ENCODE measurements at regions of chr22 and their contacts with region 1.

Region 1: GRCh38 chr22:32444068-32444467 is 20.2 kb downstream of the BPIFC start:
- DNase-seq: peak; percentile 16 to 44 (median 25)
- ATAC-seq: peak; percentile 86
- H3K4me3 ChIP-seq: no peak overlapping the region
- H3K27ac ChIP-seq: no peak overlapping the region
- H3K4me1 ChIP-seq: no peaks in the 10 kb centered on the region
- H3K27me3 ChIP-seq: peaks cover 8 to 22% of the 10 kb centered on the region in 2 experiments; a peak in 4 of 5 replicates
- CTCF ChIP-seq: peak; percentile 49 to 63 (median 53)
- EP300 ChIP-seq: no peak
- POLR2A ChIP-seq: no peak
- RAD21 ChIP-seq: peak in 1 of 2 experiments; percentile 61; a peak in 3 of 4 replicates

Region 2: DNA sequence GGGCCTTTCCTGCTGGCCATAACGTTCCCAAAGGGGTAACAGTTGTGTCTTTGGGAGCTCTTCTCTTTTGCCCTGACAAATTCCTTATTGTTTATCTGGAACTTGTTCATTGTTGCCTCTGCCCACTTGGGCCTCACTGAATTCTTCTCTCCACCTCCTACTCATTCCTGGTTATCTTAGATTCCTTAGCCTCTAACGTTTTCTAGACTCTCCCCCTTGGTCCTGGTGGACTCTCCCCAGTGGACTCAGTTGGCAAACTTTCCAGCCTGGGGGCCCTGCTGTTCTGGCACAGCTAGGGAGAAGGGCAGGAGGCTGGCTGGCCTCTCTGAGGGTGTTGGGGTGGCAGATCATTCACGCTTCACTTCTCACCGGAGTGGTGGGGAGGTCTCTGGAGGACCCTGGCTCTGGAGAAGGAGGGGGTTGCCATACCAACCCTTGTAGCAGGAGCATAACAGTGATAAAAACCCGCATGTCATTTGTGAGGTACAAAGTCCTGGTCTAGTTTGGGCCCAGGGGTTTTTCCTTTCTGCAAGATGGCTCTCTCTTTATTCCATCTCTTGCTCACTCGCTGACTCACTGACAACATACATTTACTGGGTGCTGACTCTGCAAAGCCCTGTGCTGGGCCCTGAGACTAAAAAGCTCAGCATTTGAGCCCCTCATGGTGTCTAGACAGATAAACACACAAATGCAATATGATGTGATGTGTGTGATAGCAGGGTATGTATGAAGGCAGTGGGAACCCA is 460.0 kb before region 1 on chr22:
- CTCF ChIA-PET with region 1: no interaction called
- POLR2A ChIA-PET with region 1: no interaction called
- in situ Hi-C with region 1: loop called (anchors 10 kb)
- intact Hi-C with region 1: no loop called
- DNase-seq: no peak
- ATAC-seq: no peak
- H3K4me3 ChIP-seq: no peak overlapping the region
- H3K27ac ChIP-seq: no peak overlapping the region
- H3K4me1 ChIP-seq: no peaks in the 10 kb centered on the region
- H3K27me3 ChIP-seq: peaks cover 2 to 5% of the 10 kb centered on the region in 2 experiments; a peak in 2 of 5 replicates
- CTCF ChIP-seq: no peak
- EP300 ChIP-seq: no peak
- POLR2A ChIP-seq: no peak
- RAD21 ChIP-seq: no peak

Region 3: GRCh38 chr22:32591620-32592019 is 147.6 kb after region 1 on chr22:
- CTCF ChIA-PET with region 1: no interaction called
- POLR2A ChIA-PET with region 1: no interaction called
- in situ Hi-C with region 1: no loop called
- intact Hi-C with region 1: no loop called
- DNase-seq: no peak
- ATAC-seq: no peak
- H3K4me3 ChIP-seq: no peak overlapping the region
- H3K27ac ChIP-seq: no peak overlapping the region
- H3K4me1 ChIP-seq: peaks cover 0 to 1% of the 10 kb centered on the region in 2 experiments; a peak in 1 of 5 replicates
- H3K27me3 ChIP-seq: no peaks in the 10 kb centered on the region
- CTCF ChIP-seq: no peak
- EP300 ChIP-seq: no peak
- POLR2A ChIP-seq: no peak
- RAD21 ChIP-seq: no peak